AG04450 (cell line): ENCODE measurements at regions of chr7 and their contacts with region 1.

Region 1: GRCh38 chr7:34747867-34748727 is 90.1 kb downstream of the NPSR1 start:
- DNase-seq: no peak
- H3K4me3 ChIP-seq: no peak overlapping the region
- H3K27ac ChIP-seq: no peak overlapping the region
- H3K27me3 ChIP-seq: no peaks in the 10 kb centered on the region
- CTCF ChIP-seq: no peak

Region 2: DNA sequence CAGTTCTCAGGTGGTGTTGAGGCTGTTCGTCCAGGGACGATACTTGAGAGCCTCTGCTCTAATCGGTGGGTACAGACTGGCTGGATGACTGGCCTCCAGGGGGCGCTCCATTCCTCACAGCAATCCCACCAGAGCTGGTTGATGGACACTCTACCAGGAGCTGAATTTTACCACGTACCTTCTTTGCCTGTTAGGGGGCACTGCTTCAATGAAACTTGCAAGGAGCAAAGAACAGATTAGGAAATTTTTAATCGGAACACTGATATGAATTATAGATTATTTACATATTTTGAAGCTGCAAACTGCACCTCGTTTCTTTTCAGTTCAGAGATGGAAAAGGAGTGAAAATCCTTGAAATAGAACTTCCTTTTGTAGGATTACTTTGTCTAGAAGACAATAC is 1901.4 kb before region 1 on chr7:
- CTCF ChIA-PET with region 1: no interaction called
- POLR2A ChIA-PET with region 1: no interaction called
- DNase-seq: peak; percentile 56
- H3K4me3 ChIP-seq: no peak overlapping the region
- H3K27ac ChIP-seq: no peak overlapping the region
- H3K27me3 ChIP-seq: no peaks in the 10 kb centered on the region
- CTCF ChIP-seq: peak; percentile 87

Region 3: GRCh38 chr7:33155811-33156210 is 1592.3 kb before region 1 on chr7:
- CTCF ChIA-PET with region 1: interaction called, 16 read pairs
- POLR2A ChIA-PET with region 1: no interaction called
- DNase-seq: no peak
- H3K4me3 ChIP-seq: no peak overlapping the region
- H3K27ac ChIP-seq: no peak overlapping the region
- H3K27me3 ChIP-seq: no peaks in the 10 kb centered on the region
- CTCF ChIP-seq: no peak

Region 4: GRCh38 chr7:35401217-35401879 is 653.3 kb after region 1 on chr7:
- CTCF ChIA-PET with region 1: no interaction called
- POLR2A ChIA-PET with region 1: no interaction called
- DNase-seq: no peak
- H3K4me3 ChIP-seq: no peak overlapping the region
- H3K27ac ChIP-seq: no peak overlapping the region
- H3K27me3 ChIP-seq: no peaks in the 10 kb centered on the region
- CTCF ChIP-seq: no peak